Cardiac septum (tissue), 1 donor: ENCODE measurements at regions of chr15 and their contacts with region 1.

Region 1: GRCh38 chr15:72155635-72156616 is 37.7 kb downstream of the SENP8 start:
- DNase-seq: peak; percentile 91

Region 2: DNA sequence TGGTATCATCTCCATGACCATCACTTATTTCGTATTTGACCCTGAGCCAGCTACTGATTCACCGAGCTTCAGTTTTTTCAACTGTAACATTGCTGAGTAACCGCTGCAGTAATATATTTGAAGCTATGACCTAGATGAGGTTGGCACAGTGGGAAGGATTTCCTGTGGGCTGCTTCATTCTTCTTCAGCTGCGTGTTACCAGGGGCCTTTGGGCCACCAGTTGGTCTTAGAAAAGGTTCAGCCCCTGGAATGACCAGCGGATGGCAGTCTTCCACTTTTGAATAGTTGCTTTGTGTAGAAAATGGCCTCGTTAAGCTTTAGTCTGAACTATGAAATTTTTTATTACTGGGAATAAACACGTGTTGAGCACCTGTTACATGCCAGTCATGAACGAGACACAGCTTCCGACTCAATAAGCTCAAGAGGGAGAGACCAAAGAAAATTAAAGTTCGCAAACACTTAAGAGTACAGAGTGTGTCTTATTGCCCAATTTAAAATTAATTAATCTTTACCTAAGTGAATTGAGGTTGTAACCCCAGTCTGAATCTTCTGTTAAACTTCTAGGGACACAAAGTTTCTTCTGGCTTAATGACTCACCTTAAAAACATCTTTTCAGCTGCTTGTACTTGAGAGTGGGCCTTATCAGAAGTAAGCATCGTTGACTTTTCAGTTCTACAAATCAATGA is 403.2 kb before region 1 on chr15:
- intact Hi-C with region 1: loop called (anchors 5 kb)
- DNase-seq: no peak

Region 3: DNA sequence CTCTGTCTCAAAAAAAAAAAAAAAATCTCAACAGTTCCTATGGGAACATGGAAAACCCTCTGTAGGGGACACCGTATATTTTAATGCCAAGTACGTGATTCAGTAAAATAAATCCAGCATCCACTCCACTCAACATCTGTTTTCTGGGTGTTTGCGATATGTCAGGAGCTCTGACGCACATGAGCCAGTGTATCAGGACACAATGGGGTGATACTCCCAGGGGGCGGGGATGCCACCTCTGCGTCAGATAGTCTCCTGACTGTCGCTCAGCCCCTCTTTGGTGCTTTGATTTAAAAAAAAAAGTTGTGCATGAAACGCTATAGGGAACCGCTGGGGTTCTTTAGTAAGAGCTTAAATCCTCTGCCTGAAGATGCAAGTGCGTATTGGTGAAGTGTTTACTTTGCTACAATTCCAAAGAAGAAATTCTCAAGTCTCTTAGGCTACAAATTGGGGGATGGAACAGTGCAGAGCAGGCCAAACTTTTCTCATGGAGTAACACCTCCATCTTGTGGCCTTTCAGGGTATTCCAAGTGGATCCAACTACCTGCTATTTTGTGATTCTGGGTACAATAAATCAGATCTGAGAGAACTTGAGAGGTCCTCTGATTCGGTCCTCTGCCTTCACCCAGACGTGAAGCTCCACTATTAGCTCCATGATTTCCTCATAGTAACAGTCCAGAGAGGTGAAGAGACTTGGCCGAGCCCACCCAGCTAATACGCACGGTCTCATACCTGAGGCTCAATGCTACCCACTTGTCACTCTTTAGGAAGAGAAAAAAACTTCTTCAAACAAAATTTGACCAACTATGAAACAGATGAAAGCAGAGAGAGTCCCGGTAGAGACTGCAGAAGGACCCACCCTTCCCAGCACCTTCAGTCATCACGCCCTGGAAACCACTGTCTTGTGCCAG is 354.8 kb before region 1 on chr15:
- intact Hi-C with region 1: loop called (anchors 10 kb)
- DNase-seq: no peak

Region 4: GRCh38 chr15:72098040-72098439 is 57.9 kb before region 1 on chr15:
- intact Hi-C with region 1: no loop called
- DNase-seq: no peak

Region 5: GRCh38 chr15:72117486-72118399 is 38.2 kb before region 1 on chr15 and contains the start of gene MYO9A:
- intact Hi-C with region 1: loop called (anchors 1 kb)
- DNase-seq: peak; percentile 100
- total RNA-seq, gene MYO9A: 31.4 TPM